Prostate gland (tissue), 2 donors: ENCODE measurements at regions of chr11 and their contacts with region 1.

Region 1: GRCh38 chr11:33065445-33066178 is 26.2 kb downstream of the TCP11L1 start:
- DNase-seq: peak; percentile 67
- H3K4me3 ChIP-seq: no peak overlapping the region
- H3K27ac ChIP-seq: no peak overlapping the region
- H3K4me1 ChIP-seq: peaks cover 7% of the 10 kb centered on the region
- H3K27me3 ChIP-seq: no peaks in the 10 kb centered on the region
- CTCF ChIP-seq: peak; percentile 66 to 91 (median 88)
- POLR2A ChIP-seq: no peak

Region 2: DNA sequence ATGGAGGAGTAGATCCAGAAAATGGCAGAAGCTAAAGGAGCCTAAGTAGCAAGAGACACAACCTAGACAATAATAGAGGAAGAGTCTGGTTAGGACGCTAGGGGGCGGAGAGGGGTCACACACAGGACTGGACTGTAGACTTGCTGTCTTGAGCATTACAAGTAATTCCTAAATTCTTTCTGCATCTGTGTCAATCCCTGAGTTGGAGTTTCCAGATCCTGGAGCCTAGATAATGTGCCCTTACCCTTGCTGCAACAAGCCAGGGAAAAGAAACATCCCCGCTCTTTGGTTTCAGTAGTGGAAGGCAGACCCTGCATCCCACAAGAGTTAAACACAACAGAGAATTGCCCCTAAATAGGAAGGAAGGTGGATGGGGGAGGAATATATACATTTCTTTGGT is 256.3 kb before region 1 on chr11:
- intact Hi-C with region 1: loop called (anchors 10 kb)
- DNase-seq: peak; percentile 73
- H3K4me3 ChIP-seq: no peak overlapping the region
- H3K27ac ChIP-seq: no peak overlapping the region
- H3K4me1 ChIP-seq: no peaks in the 10 kb centered on the region
- H3K27me3 ChIP-seq: no peaks in the 10 kb centered on the region
- CTCF ChIP-seq: peak; percentile 10 to 61 (median 48)
- POLR2A ChIP-seq: no peak

Region 3: GRCh38 chr11:32960553-32961164 is 105.0 kb before region 1 on chr11:
- intact Hi-C with region 1: loop called (anchors 2 kb)
- DNase-seq: no peak
- H3K4me3 ChIP-seq: no peak overlapping the region
- H3K27ac ChIP-seq: no peak overlapping the region
- H3K4me1 ChIP-seq: no peaks in the 10 kb centered on the region
- H3K27me3 ChIP-seq: no peaks in the 10 kb centered on the region
- CTCF ChIP-seq: peak; percentile 49 to 79 (median 70)
- POLR2A ChIP-seq: no peak

Region 4: DNA sequence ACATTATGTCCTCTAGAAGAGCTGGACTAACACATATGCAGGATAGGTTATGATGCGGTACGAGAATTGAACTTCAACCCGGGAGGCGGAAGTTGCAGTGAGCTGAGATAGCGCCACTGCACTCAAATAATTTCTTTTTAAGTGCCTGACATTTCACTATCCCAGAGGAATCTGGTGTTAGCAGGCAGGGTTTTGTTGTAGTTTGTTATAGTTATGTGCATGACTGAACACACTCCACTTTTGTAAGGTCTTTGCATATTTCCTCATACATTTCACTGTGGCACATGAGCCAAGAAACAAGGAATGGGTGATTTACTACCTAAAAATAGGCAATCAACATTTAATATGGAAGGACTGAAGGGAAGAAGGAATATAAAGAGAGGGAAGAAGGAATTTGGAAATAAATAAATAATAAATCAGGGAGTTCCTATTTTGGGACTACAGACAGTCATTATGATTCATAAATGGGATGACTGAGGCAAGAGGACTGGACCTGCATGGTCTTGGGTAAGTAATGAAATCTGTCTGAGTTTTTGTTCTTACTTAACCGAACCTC is 182.9 kb after region 1 on chr11:
- intact Hi-C with region 1: no loop called
- DNase-seq: no peak
- H3K4me3 ChIP-seq: no peak overlapping the region
- H3K27ac ChIP-seq: no peak overlapping the region
- H3K4me1 ChIP-seq: no peaks in the 10 kb centered on the region
- H3K27me3 ChIP-seq: no peaks in the 10 kb centered on the region
- CTCF ChIP-seq: no peak
- POLR2A ChIP-seq: no peak

Region 5: GRCh38 chr11:33557201-33557600 is 491.6 kb after region 1 on chr11:
- intact Hi-C with region 1: no loop called
- DNase-seq: no peak
- H3K4me3 ChIP-seq: no peak overlapping the region
- H3K27ac ChIP-seq: no peak overlapping the region
- H3K4me1 ChIP-seq: no peaks in the 10 kb centered on the region
- H3K27me3 ChIP-seq: no peaks in the 10 kb centered on the region
- CTCF ChIP-seq: no peak
- POLR2A ChIP-seq: no peak